HEK293 (cell line): ENCODE measurements at regions of chr2 and their contacts with region 1.

Region 1: DNA sequence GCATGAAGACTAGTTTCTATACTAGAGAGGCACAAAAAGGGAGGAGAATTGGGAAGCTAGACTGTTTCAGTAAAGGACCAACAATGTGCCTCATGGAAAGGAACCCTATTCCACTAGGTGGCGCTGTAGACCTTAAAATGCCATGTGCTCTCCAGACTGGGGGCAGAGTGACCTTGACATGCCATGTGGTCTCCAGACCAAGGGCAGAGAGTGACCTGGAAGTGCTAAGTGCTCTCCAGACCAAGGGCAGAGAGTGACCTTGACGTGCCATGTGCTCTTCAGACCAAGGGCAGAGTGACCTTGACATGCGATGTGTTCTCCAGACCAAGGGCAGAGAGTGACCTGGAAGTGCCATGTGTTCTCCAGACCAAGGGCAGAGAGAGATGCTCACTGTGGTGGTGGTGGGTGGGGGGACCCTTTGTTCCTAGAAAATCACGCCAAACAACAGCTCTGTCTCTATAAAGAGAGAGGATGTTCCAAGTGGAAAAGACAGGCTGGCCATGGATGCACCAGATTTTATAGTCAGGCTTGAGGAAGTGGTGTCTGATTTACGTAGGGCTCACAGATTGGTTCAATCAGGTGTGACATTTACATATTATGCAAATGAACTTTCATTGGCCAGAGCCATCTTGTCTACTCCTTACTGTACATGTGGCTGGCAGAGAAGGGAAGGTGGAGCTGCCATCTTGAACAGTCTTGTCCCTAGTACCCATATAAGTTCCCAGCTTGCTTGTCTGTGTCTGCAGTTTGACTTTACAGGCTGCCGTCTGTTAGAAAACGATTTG is 344.0 kb upstream of the DDX18 start:
- H3K4me3 ChIP-seq: no peak overlapping the region
- H3K27ac ChIP-seq: no peak overlapping the region
- H3K4me1 ChIP-seq: no peaks in the 10 kb centered on the region
- CTCF ChIP-seq: peak; percentile 68; the same call in 1 of the 2 replicates

Region 2: GRCh38 chr2:117536139-117536538 is 65.6 kb after region 1 on chr2:
- CTCF ChIA-PET with region 1: interaction called, 28 read pairs
- POLR2A ChIA-PET with region 1: no interaction called
- H3K4me3 ChIP-seq: no peak overlapping the region
- H3K27ac ChIP-seq: no peak overlapping the region
- H3K4me1 ChIP-seq: no peaks in the 10 kb centered on the region
- CTCF ChIP-seq: 0 out of 2 replicates have a peak, but pooled peaks have one; percentile 22

Region 3: GRCh38 chr2:117771969-117772630 is 301.6 kb after region 1 on chr2:
- CTCF ChIA-PET with region 1: interaction called, 17 read pairs
- POLR2A ChIA-PET with region 1: no interaction called
- H3K4me3 ChIP-seq: no peak overlapping the region
- H3K27ac ChIP-seq: no peak overlapping the region
- H3K4me1 ChIP-seq: no peaks in the 10 kb centered on the region
- CTCF ChIP-seq: 0 out of 2 replicates have a peak, but pooled peaks have one; percentile 8

Region 4: GRCh38 chr2:117785740-117786139 is 315.2 kb after region 1 on chr2:
- CTCF ChIA-PET with region 1: interaction called, 16 read pairs
- POLR2A ChIA-PET with region 1: no interaction called
- H3K4me3 ChIP-seq: no peak overlapping the region
- H3K27ac ChIP-seq: no peak overlapping the region
- H3K4me1 ChIP-seq: no peaks in the 10 kb centered on the region
- CTCF ChIP-seq: no peak

Region 5: DNA sequence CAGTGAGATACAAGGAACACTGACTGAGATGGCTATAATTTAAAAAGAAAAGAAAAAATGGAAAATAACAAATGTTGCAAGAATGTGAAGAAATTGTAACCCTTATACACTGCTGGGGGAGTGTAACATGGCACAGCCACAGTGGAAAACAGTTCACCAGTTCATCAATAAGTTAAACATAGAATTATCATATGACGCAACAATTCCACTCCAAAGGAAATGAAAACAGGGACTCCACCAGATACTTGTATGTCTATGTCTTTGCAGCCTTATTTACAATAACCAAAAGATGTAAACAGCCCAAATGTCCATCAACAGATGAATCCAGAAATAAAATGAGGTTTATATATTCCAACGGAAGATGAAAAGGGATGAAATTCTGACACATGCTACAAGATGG is 374.8 kb after region 1 on chr2:
- CTCF ChIA-PET with region 1: no interaction called
- POLR2A ChIA-PET with region 1: no interaction called
- H3K4me3 ChIP-seq: no peak overlapping the region
- H3K27ac ChIP-seq: no peak overlapping the region
- H3K4me1 ChIP-seq: no peaks in the 10 kb centered on the region; the same call in 1 of the 2 replicates
- CTCF ChIP-seq: no peak